Tibial artery (tissue), 4 donors: ENCODE measurements at regions of chr18 and their contacts with region 1.

Region 1: GRCh38 chr18:28767727-28768211 is 590.8 kb upstream of the CDH2 start:
- DNase-seq: no peak
- H3K4me3 ChIP-seq: no peak overlapping the region
- H3K27ac ChIP-seq: no peak overlapping the region
- H3K4me1 ChIP-seq: no peaks in the 10 kb centered on the region
- H3K27me3 ChIP-seq: no peaks in the 10 kb centered on the region
- CTCF ChIP-seq: no peak

Region 2: DNA sequence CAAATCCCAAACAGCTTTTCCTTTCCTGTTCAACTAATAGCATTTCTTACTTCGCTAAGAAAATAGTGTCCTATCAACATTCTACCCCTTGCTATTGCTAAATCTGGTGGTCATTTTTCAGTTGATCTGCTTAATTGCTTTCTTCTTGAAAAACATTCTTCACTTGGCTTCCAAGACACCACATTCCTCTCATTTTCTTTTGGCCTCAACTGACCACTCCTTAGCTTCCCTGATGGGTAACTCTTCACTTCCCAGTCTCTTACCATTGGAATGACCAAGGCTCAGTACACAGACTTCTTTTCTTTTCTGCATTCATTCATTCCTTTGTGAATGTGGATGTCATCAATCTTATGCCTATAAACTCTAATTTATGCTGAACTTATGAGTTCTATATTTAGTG is 360.1 kb before region 1 on chr18:
- intact Hi-C with region 1: no loop called
- DNase-seq: no peak
- H3K4me3 ChIP-seq: no peak overlapping the region
- H3K27ac ChIP-seq: no peak overlapping the region
- H3K4me1 ChIP-seq: no peaks in the 10 kb centered on the region
- H3K27me3 ChIP-seq: no peaks in the 10 kb centered on the region
- CTCF ChIP-seq: no peak

Region 3: DNA sequence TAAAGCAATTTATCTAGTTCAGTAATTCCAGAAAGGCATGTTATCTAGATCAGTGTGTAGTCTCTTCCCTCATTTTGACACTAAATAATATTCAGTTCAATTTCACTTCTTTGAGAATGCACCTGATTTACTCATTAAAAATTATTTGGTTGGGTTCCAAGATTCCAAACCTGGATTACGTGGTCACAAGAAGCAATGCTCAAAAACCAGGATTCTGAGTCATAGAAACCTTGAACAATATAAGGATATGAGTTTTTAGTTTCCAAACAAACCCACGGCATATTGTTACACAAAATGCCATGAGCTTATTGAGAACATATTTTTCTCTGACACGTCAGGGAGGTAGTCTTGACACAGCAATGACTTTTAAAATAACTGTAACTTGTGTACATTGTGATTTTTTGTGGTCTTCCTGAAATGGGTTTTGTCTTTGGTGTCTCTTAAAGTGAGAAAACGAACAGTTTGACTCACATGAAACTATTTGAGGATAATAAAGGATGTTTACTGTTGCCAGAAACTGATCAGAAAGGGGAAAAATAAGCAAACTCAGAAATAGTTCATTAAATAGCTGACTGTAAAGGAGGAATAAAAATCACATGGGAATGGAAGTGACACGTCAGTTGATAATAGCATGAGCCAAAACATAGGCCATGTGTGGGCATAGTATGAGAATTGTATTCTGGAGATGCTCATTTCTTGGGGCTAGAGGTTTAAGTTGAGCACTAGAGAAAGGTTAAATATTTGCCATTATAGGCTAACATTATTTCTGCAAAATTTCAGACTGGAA is 26.9 kb after region 1 on chr18:
- intact Hi-C with region 1: loop called (anchors 1 kb)
- DNase-seq: no peak
- H3K4me3 ChIP-seq: no peak overlapping the region
- H3K27ac ChIP-seq: no peak overlapping the region
- H3K4me1 ChIP-seq: no peaks in the 10 kb centered on the region
- H3K27me3 ChIP-seq: no peaks in the 10 kb centered on the region
- CTCF ChIP-seq: no peak

Region 4: DNA sequence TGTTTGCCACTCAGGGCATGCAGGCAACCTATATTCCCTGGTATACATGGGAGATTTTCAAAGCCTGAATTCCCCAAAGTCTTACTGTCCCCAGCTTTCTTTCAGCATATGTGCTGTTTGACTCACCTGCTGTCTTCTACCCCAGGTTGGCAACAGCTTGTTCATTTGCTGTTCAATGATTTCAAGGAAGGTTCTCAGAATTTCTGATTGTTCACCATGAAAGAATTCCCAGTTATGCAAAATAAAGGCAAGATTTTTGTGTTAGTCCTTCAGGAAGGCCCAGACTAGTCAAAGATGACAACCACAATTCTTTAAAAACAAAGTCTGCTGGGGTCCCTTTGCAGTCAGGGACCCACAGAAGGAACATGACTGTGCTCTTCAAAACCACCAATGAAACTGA is 467.0 kb after region 1 on chr18:
- intact Hi-C with region 1: no loop called
- DNase-seq: no peak
- H3K4me3 ChIP-seq: no peak overlapping the region
- H3K27ac ChIP-seq: no peak overlapping the region
- H3K4me1 ChIP-seq: no peaks in the 10 kb centered on the region
- H3K27me3 ChIP-seq: no peaks in the 10 kb centered on the region
- CTCF ChIP-seq: no peak